Activated B cell treated with CpG ODN at 0.5 μM for 24 hours (primary cell): ENCODE measurements at regions of chr10 and their contacts with region 1.

Region 1: DNA sequence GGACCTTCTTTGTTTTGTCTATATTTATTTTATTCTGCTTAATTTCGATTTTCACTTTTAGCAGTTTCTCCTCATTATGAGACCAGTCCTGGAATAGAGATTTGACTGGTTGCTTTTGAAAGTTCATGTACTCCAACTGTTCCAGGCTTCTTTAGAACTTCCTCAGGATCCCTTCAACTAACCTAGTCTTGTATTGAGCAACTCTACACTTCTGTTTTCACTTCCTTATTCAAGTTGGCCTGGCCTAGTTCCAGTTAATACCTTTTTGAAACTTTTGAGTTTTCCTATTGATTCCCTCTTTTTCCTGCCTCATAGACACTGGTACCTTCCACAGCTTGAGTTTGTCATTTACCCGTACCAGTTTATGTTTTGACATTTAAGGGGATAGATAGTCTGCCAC is 421.7 kb downstream of the ATRNL1 start:
- DNase-seq: no peak
- ATAC-seq: no peak
- H3K4me3 Mint-ChIP-seq: no peak overlapping the region
- H3K27ac Mint-ChIP-seq: no peak overlapping the region
- H3K4me1 Mint-ChIP-seq: no peaks in the 10 kb centered on the region
- H3K27me3 Mint-ChIP-seq: no peaks in the 10 kb centered on the region
- CTCF ChIP-seq: no peak

Region 2: GRCh38 chr10:115558252-115558651 is 43.4 kb after region 1 on chr10:
- CTCF ChIA-PET with region 1: no interaction called
- POLR2A ChIA-PET with region 1: no interaction called
- intact Hi-C with region 1: loop called (anchors 1 kb)
- DNase-seq: no peak
- ATAC-seq: no peak
- H3K4me3 Mint-ChIP-seq: no peak overlapping the region
- H3K27ac Mint-ChIP-seq: no peak overlapping the region
- H3K4me1 Mint-ChIP-seq: no peaks in the 10 kb centered on the region
- H3K27me3 Mint-ChIP-seq: no peaks in the 10 kb centered on the region
- CTCF ChIP-seq: no peak